OCI-LY7 (cell line): ENCODE measurements at regions of chr7 and their contacts with region 1.

Region 1: GRCh38 chr7:135601182-135601581 is 43.5 kb downstream of the NUP205 start:
- DNase-seq: no peak
- H3K4me3 ChIP-seq: no peak overlapping the region
- H3K27ac ChIP-seq: no peak overlapping the region
- H3K4me1 ChIP-seq: no peaks in the 10 kb centered on the region
- CTCF ChIP-seq: no peak

Region 2: DNA sequence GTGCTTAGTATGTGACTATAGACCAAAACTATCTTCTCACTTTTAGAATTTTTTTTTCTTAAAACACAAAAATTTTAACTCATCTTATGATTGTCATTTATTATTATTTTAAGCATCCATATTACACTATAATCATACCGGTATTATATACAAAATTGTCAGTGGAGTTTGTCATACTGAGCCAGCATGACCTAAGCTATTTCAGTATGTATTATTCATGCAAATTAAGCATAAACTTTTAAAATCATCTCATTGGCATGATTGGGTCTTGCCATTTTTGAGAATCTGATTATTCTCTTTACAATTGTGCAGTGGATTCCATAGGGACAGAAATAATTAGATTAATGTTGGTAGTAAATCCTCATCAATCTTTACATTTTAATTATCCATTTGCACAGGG is 15.0 kb after region 1 on chr7:
- CTCF ChIA-PET with region 1: no interaction called
- POLR2A ChIA-PET with region 1: interaction called, 15 read pairs
- intact Hi-C with region 1: no loop called
- DNase-seq: no peak
- H3K4me3 ChIP-seq: no peak overlapping the region
- H3K27ac ChIP-seq: no peak overlapping the region
- H3K4me1 ChIP-seq: no peaks in the 10 kb centered on the region
- CTCF ChIP-seq: no peak

Region 3: DNA sequence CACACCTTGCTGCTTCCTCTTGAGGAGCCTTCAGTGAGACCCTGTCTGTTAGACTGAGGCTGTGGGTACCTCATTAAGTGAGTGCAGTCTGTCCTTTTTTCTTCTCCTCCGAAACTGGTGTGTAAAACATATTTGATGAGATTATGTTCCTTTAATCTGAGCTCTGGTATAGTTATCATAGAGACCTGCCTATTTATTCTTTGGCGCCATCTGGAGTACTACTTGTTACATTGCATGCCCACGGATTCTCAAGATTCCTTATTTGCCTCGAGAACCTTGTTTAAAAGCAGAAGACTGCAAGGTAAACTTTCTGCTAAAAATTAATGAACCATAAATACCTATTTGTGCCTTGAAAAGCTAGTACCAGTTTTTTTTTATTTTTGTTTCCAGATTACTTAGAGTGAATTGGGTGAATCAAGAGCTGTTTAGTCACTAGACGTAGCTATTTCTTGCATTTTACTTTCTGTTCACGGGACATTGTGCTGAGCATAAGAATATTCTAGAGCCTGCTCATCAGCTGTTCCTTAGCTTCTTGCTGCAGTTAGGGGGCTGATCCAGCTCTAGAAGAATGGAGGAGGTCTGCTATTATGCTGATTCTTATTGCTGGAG is 44.2 kb after region 1 on chr7:
- CTCF ChIA-PET with region 1: interaction called, 3 read pairs
- POLR2A ChIA-PET with region 1: interaction called, 3 read pairs
- intact Hi-C with region 1: loop called (anchors 5 kb)
- DNase-seq: peak; percentile 66
- H3K4me3 ChIP-seq: no peak overlapping the region
- H3K27ac ChIP-seq: no peak overlapping the region
- H3K4me1 ChIP-seq: no peaks in the 10 kb centered on the region
- CTCF ChIP-seq: peak; percentile 84

Region 4: DNA sequence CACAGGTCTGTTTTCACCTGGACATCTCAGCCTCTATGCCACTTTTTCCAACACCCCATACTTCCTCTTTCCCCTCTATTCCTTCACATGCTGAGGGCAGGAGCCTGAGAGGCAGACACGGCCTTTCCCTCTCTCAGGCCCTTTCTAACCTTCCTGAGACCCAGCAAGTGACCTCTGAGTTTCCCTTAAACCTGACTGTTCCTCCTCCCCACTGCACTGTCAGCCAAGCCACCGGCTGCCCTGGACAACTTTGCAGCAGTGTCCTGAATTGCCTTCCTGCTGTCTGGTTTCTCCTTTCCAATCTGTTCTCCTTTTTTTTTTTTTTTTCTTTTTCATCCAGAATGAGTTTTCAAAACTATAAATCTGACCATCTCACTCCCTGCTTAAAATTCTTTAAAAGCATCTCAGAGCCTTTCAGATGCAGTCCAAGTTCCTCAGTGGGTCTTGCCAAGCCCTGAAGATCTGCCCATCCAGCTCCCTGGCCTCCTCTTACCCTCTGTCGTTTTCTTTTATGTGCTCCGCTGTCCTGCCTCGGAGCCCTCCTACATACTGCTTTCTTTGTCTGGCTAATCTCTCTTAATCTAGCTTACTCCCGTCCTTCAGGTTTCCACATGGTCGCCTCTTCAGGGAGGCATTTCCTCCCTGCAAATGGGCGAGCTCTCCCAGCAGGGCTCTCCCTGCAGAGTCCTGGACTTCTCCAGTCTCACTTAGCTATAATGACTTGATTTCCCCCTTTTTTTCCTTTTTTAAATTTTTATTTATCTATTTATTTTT is 96.3 kb after region 1 on chr7:
- CTCF ChIA-PET with region 1: no interaction called
- POLR2A ChIA-PET with region 1: no interaction called
- intact Hi-C with region 1: no loop called
- DNase-seq: no peak
- H3K4me3 ChIP-seq: no peak overlapping the region
- H3K27ac ChIP-seq: no peak overlapping the region
- H3K4me1 ChIP-seq: no peaks in the 10 kb centered on the region
- CTCF ChIP-seq: no peak